Naive thymus-derived CD4-positive, alpha-beta T cell (primary cell): ENCODE measurements at regions of chr5 and their contacts with region 1.

Region 1: GRCh38 chr5:43040287-43041098 is at the start of gene ANXA2R:
- DNase-seq: peak; percentile 76 to 98 (median 96)
- ATAC-seq: peak; percentile 72
- H3K4me3 ChIP-seq: peak within 1 kb of the TSS; percentile 73
- H3K4me3 Mint-ChIP-seq: peak within 1 kb of the TSS; percentile 82 to 99 (median 98)
- H3K27ac ChIP-seq: peak within 1 kb of the TSS; percentile 96
- H3K27ac Mint-ChIP-seq: peak within 1 kb of the TSS; percentile 93 to 100 (median 99)
- H3K4me1 ChIP-seq: peaks cover 17 to 31% of the 10 kb centered on the region in 2 donors
- H3K4me1 Mint-ChIP-seq: peaks cover 14 to 75% (median 45%) of the 10 kb centered on the region in 7 donors
- H3K27me3 ChIP-seq: no peaks in the 10 kb centered on the region
- H3K27me3 Mint-ChIP-seq: no peaks in the 10 kb centered on the region
- total RNA-seq, gene ANXA2R: 13.2 to 61.4 (median 42.0) TPM

Region 2: DNA sequence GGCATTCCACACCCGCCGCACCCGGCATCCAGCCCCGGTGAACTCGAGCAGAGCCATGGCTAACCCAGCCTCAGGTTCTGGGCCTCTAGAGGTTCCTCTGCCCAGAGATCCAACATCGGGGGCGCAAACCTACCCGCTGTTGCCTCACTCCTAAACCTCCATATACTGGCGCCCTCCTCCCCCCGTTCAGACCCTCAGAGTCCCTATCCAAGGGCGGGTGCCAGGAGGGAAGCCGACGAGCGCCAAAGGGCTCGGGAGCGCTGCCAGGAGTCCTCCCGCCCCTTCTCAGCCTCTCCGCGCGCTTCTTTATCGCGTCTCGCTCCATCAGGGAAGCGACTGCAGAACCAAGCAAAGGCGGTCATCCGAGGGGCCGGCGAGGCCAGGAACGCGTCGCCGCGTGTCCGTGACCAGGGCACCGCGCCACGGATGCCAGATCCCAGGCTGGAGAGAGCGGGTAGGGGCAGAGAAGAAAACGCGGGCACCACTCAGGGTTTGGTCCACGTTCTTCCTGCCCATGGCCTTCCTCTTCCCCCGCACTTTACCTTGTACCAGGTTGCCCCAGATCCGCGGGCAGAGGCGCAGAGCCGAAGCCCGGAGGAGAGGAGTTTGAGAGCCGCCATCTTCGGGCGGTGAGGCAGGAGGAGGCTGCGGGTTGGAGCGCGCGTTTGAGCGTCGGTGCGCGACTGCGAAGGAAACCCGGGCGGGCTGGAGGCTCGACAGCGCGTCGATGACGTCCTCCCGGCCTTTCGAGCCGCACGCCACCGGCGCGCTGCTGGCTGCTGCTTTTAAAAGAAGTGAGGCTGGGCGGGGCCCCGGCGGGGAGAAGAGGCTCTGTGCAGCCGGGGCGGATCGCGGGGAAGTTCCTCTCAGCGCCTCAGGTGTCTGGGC is 1170.5 kb before region 1 on chr5 and contains the start of gene OXCT1:
- CTCF ChIA-PET with region 1: no interaction called
- POLR2A ChIA-PET with region 1: interaction called, 3 read pairs
- intact Hi-C with region 1: loop called in 1 of 2 experiments (anchors 1 kb)
- DNase-seq: peak; percentile 88 to 96 (median 95)
- ATAC-seq: peak; percentile 97
- H3K4me3 ChIP-seq: peak within 1 kb of the TSS; percentile 91
- H3K4me3 Mint-ChIP-seq: peak within 1 kb of the TSS; percentile 85 to 94 (median 90)
- H3K27ac ChIP-seq: peak within 1 kb of the TSS; percentile 97
- H3K27ac Mint-ChIP-seq: peak within 1 kb of the TSS; percentile 89 to 98 (median 97)
- H3K4me1 ChIP-seq: peaks cover 16% of the 10 kb centered on the region in 2 donors
- H3K4me1 Mint-ChIP-seq: peaks cover 18 to 63% (median 57%) of the 10 kb centered on the region in 7 donors
- H3K27me3 ChIP-seq: no peaks in the 10 kb centered on the region
- H3K27me3 Mint-ChIP-seq: no peaks in the 10 kb centered on the region
- total RNA-seq, gene OXCT1: 18.6 to 53.1 (median 30.0) TPM

Region 3: DNA sequence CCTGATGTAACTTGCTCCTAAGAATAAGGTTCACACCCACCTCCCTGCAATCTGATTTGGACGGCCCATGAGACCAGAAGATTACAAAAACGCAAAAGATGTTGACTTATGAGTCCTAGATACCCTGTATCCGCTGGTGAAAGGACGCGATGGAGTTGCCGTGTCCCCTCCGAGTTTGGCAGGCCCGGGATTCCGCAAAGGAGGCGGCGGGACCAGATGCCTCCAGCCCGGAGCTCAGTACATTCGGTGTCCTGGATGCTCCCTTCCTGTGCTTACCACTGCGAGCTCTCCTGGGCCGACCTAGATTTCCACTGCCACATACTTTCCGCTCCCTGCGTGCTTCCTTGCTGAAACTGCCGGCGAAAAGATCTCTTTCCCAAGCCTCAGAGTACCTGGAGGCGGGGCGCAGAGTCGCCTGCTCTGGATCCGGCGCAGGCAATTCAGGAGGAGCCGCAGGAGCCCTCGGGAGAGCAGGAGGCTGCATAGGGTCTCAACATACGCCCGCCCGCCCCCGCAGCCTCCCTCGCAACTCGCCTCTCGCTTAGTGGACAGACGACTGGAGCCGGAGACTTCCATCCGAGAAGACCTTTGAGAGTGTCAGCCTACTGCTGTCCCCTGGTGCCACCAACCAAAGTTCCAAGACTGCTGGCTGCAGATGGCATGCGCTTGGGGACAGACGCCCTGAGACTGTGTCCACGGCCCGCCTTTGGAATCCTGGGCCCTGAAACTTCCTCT is 40.2 kb before region 1 on chr5:
- CTCF ChIA-PET with region 1: interaction called, 85 read pairs
- POLR2A ChIA-PET with region 1: interaction called, 723 read pairs
- intact Hi-C with region 1: loop called in 1 of 2 experiments (anchors 1 kb)
- DNase-seq: no peak
- ATAC-seq: peak; percentile 29
- H3K4me3 ChIP-seq: no peak overlapping the region
- H3K4me3 Mint-ChIP-seq: peak overlapping the region in 5 of 10 donors; percentile 5 to 41 (median 24)
- H3K27ac ChIP-seq: no peak overlapping the region
- H3K27ac Mint-ChIP-seq: peak overlapping the region in 4 of 9 donors; percentile 5 to 50 (median 30)
- H3K4me1 ChIP-seq: peaks cover 8 to 13% of the 10 kb centered on the region in 2 donors
- H3K4me1 Mint-ChIP-seq: peaks cover 0 to 30% (median 15%) of the 10 kb centered on the region in 7 donors
- H3K27me3 ChIP-seq: no peaks in the 10 kb centered on the region
- H3K27me3 Mint-ChIP-seq: peaks cover 0 to 23% (median 0%) of the 10 kb centered on the region in 5 donors

Region 4: GRCh38 chr5:43027054-43027785 is 13.3 kb before region 1 on chr5:
- CTCF ChIA-PET with region 1: interaction called, 154 read pairs
- POLR2A ChIA-PET with region 1: interaction called, 1,055 read pairs
- intact Hi-C with region 1: loop called in 1 of 2 experiments (anchors 1 kb)
- DNase-seq: no peak
- ATAC-seq: no peak
- H3K4me3 ChIP-seq: no peak overlapping the region
- H3K4me3 Mint-ChIP-seq: no peak overlapping the region
- H3K27ac ChIP-seq: no peak overlapping the region
- H3K27ac Mint-ChIP-seq: peak overlapping the region in 3 of 9 donors; percentile 33 to 94 (median 51)
- H3K4me1 ChIP-seq: peaks cover 0 to 9% of the 10 kb centered on the region in 2 donors
- H3K4me1 Mint-ChIP-seq: peaks cover 16 to 45% (median 34%) of the 10 kb centered on the region in 7 donors
- H3K27me3 ChIP-seq: no peaks in the 10 kb centered on the region
- H3K27me3 Mint-ChIP-seq: peaks cover 0 to 2% (median 0%) of the 10 kb centered on the region in 5 donors

Region 5: GRCh38 chr5:43105369-43106289 is 65.1 kb after region 1 on chr5:
- CTCF ChIA-PET with region 1: interaction called, 6 read pairs
- POLR2A ChIA-PET with region 1: interaction called, 30 read pairs
- intact Hi-C with region 1: loop called (anchors 1 kb)
- DNase-seq: peak; percentile 75 to 90 (median 85)
- ATAC-seq: peak; percentile 99
- H3K4me3 ChIP-seq: peak overlapping the region; percentile 66
- H3K4me3 Mint-ChIP-seq: peak overlapping the region; percentile 77 to 93 (median 89)
- H3K27ac ChIP-seq: peak overlapping the region; percentile 59
- H3K27ac Mint-ChIP-seq: peak overlapping the region; percentile 43 to 92 (median 88)
- H3K4me1 ChIP-seq: peaks cover 6 to 22% of the 10 kb centered on the region in 2 donors
- H3K4me1 Mint-ChIP-seq: peaks cover 21 to 49% (median 38%) of the 10 kb centered on the region in 7 donors
- H3K27me3 ChIP-seq: no peaks in the 10 kb centered on the region
- H3K27me3 Mint-ChIP-seq: no peaks in the 10 kb centered on the region

Region 6: DNA sequence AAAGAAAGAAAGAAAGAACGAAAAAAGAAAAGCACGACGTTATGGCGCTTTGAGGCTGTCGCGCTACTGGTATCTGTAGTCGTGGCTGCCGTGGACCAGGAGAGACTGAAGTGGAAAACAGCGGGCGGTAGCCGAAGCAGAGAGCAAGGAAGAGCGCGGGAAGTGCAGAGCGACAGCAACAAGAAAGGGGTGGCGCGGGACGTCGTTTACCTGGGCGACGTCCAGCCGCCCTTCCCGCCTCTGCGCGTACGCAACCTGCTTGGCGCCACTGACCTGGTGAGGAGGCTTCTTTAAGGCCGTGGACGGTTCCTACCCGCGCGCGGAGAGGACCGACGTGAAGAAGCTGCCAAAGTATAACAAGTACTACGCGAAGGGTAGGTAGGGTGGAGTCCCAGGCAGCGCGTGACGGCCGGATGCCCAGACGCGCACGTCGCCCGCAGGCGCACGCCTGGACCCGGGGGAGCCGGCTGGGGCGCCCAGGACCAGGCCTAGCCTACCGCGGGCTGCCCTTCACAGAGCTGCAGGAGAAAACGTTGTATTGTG is 356.3 kb after region 1 on chr5:
- CTCF ChIA-PET with region 1: no interaction called
- POLR2A ChIA-PET with region 1: interaction called, 4 read pairs
- intact Hi-C with region 1: loop called in 1 of 2 experiments (anchors 2 kb)
- DNase-seq: peak; percentile 42 to 74 (median 66)
- ATAC-seq: peak; percentile 96
- H3K4me3 ChIP-seq: peak overlapping the region; percentile 80
- H3K4me3 Mint-ChIP-seq: peak overlapping the region; percentile 88 to 100 (median 98)
- H3K27ac ChIP-seq: peak overlapping the region; percentile 76
- H3K27ac Mint-ChIP-seq: peak overlapping the region; percentile 93 to 99 (median 97)
- H3K4me1 ChIP-seq: peaks cover 3 to 7% of the 10 kb centered on the region in 2 donors
- H3K4me1 Mint-ChIP-seq: peaks cover 15 to 62% (median 41%) of the 10 kb centered on the region in 7 donors
- H3K27me3 ChIP-seq: no peaks in the 10 kb centered on the region
- H3K27me3 Mint-ChIP-seq: no peaks in the 10 kb centered on the region

Region 7: DNA sequence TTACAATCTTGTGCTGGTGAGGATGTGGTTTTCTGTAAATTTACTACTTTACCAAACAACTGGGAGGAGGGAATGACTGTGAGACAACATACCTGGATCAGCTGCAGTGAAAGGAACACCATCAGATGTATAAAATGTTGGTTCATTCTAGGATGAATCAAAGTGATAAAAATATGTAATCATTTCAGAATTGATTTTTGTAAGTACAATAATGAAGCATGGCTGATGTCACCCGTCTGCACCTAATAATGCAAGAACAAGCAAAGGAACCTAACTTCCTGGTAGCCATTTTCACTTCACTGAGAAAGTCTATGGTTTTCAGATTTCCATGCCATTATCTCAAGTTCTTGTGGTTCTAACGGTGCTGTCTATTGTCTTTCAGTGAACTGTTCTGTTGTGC is 493.2 kb after region 1 on chr5:
- CTCF ChIA-PET with region 1: no interaction called
- POLR2A ChIA-PET with region 1: no interaction called
- intact Hi-C with region 1: no loop called
- DNase-seq: no peak
- ATAC-seq: no peak
- H3K4me3 ChIP-seq: no peak overlapping the region
- H3K4me3 Mint-ChIP-seq: peak overlapping the region in 1 of 10 donors; percentile 4
- H3K27ac ChIP-seq: no peak overlapping the region
- H3K27ac Mint-ChIP-seq: peak overlapping the region in 7 of 9 donors; percentile 7 to 79 (median 34)
- H3K4me1 ChIP-seq: no peaks in the 10 kb centered on the region
- H3K4me1 Mint-ChIP-seq: peaks cover 0 to 21% (median 14%) of the 10 kb centered on the region in 7 donors
- H3K27me3 ChIP-seq: no peaks in the 10 kb centered on the region
- H3K27me3 Mint-ChIP-seq: no peaks in the 10 kb centered on the region

Region 8: DNA sequence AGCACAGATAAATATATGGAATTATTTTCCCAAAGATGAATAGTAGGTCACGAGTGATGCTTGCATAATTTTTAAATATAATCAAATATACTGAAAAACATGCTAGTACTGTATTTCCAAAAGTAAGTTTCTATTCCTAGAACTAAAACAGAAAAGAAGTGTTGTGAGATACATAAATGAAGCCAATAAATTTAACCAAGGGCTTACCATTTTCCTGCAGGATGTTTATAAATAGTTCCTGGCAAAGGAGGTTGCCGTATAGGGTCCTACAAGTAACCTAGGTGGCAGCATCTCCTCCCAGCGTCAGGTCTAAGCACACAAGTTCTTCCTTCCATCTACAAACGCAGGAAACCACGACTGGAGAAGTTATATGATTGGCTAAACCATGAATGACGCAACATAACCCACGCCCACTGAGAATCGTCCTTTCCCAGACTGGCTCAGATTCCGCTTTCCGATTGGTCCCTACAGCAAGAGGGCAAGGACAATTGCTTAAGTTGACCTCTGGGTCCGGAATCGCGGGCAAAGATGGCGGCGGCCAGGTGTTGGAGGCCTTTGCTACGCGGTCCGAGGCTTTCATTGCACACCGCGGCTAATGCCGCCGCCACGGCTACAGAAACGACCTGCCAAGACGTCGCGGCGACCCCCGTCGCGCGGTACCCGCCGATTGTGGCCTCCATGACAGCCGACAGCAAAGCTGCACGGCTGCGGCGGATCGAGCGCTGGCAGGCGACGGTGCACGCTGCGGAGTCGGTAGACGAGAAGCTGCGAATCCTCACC is 1768.1 kb after region 1 on chr5 and contains the start of gene MRPS30:
- CTCF ChIA-PET with region 1: no interaction called
- POLR2A ChIA-PET with region 1: no interaction called
- intact Hi-C with region 1: loop called in 1 of 2 experiments (anchors 10 kb)
- DNase-seq: peak; percentile 65 to 96 (median 94)
- ATAC-seq: peak; percentile 98
- H3K4me3 ChIP-seq: peak within 1 kb of the TSS; percentile 85
- H3K4me3 Mint-ChIP-seq: peak within 1 kb of the TSS; percentile 86 to 98 (median 96)
- H3K27ac ChIP-seq: peak within 1 kb of the TSS; percentile 81
- H3K27ac Mint-ChIP-seq: peak within 1 kb of the TSS; percentile 84 to 98 (median 95)
- H3K4me1 ChIP-seq: peaks cover 0 to 20% of the 10 kb centered on the region in 2 donors
- H3K4me1 Mint-ChIP-seq: peaks cover 12 to 53% (median 36%) of the 10 kb centered on the region in 7 donors
- H3K27me3 ChIP-seq: no peaks in the 10 kb centered on the region
- H3K27me3 Mint-ChIP-seq: peaks cover 0 to 5% (median 3%) of the 10 kb centered on the region in 5 donors
- total RNA-seq, gene MRPS30: 31.1 to 61.0 (median 47.1) TPM